HCT116 (cell line): ENCODE measurements at regions of chr19 and their contacts with region 1.

Region 1: GRCh38 chr19:680287-681028 is 4.3 kb downstream of the FSTL3 start:
- DNase-seq: peak; percentile 93
- ATAC-seq: peak; percentile 74
- H3K4me3 ChIP-seq: peak overlapping the region; percentile 56 to 82
- H3K27ac ChIP-seq: peak overlapping the region; percentile 99
- H3K4me1 ChIP-seq: peaks cover 21 to 45% of the 10 kb centered on the region in 2 experiments
- H3K27me3 ChIP-seq: no peaks in the 10 kb centered on the region
- CTCF ChIP-seq: peak in 2 of 3 experiments; percentile 33 to 35; a peak in 4 of 6 replicates
- POLR2A ChIP-seq: peak; percentile 64
- RAD21 ChIP-seq: no peak

Region 2: GRCh38 chr19:703651-704446 is 23.4 kb after region 1 on chr19:
- CTCF ChIA-PET with region 1: no interaction called
- POLR2A ChIA-PET with region 1: interaction called, 10 read pairs
- RAD21 ChIA-PET with region 1: no interaction called
- intact Hi-C with region 1: loop called (anchors 1 kb)
- DNase-seq: peak; percentile 72
- ATAC-seq: peak; percentile 83
- H3K4me3 ChIP-seq: peak overlapping the region; percentile 46 to 54
- H3K27ac ChIP-seq: peak overlapping the region; percentile 64
- H3K4me1 ChIP-seq: peaks cover 16 to 27% of the 10 kb centered on the region in 2 experiments
- H3K27me3 ChIP-seq: no peaks in the 10 kb centered on the region
- CTCF ChIP-seq: no peak
- POLR2A ChIP-seq: no peak
- RAD21 ChIP-seq: no peak

Region 3: DNA sequence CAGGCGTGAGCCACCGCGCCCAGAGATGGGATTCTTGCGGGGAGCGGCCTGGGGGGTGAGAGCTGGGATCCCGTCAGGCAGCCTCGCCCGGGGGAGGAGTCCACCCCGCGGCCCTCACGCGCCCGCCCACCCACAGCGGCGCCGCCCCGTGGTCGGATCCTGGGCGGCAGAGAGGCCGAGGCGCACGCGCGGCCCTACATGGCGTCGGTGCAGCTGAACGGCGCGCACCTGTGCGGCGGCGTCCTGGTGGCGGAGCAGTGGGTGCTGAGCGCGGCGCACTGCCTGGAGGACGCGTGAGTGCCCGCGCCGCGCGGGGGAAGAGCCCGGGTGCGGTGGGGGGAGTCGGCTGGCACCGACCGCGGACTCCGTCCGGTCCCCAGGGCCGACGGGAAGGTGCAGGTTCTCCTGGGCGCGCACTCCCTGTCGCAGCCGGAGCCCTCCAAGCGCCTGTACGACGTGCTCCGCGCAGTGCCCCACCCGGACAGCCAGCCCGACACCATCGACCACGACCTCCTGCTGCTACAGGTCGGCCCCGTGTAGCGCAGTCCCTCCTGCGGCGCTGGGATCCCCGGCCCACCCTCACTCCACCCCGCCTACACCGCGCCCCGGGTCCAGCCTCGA is 180.1 kb after region 1 on chr19:
- CTCF ChIA-PET with region 1: no interaction called
- POLR2A ChIA-PET with region 1: no interaction called
- RAD21 ChIA-PET with region 1: no interaction called
- intact Hi-C with region 1: no loop called
- DNase-seq: peak; percentile 73
- ATAC-seq: peak; percentile 79
- H3K4me3 ChIP-seq: peak overlapping the region; percentile 71 to 78
- H3K27ac ChIP-seq: peak overlapping the region; percentile 96
- H3K4me1 ChIP-seq: peaks cover 14 to 32% of the 10 kb centered on the region in 2 experiments
- H3K27me3 ChIP-seq: no peaks in the 10 kb centered on the region
- CTCF ChIP-seq: peak in 1 of 3 experiments; percentile 23; a peak in 1 of 6 replicates
- POLR2A ChIP-seq: peak; percentile 61
- RAD21 ChIP-seq: peak; percentile 22; the same call in 1 of the 2 replicates